A673 (cell line): ENCODE measurements at regions of chr10 and their contacts with region 1.

Region 1: GRCh38 chr10:35379226-35380137 is 43.2 kb downstream of the CCNY start:
- DNase-seq: peak; percentile 92
- H3K4me3 ChIP-seq: no peak overlapping the region
- H3K27ac ChIP-seq: peak overlapping the region; percentile 87
- H3K4me1 ChIP-seq: peaks cover 56% of the 10 kb centered on the region
- H3K27me3 ChIP-seq: no peaks in the 10 kb centered on the region
- CTCF ChIP-seq: peak; percentile 44

Region 2: DNA sequence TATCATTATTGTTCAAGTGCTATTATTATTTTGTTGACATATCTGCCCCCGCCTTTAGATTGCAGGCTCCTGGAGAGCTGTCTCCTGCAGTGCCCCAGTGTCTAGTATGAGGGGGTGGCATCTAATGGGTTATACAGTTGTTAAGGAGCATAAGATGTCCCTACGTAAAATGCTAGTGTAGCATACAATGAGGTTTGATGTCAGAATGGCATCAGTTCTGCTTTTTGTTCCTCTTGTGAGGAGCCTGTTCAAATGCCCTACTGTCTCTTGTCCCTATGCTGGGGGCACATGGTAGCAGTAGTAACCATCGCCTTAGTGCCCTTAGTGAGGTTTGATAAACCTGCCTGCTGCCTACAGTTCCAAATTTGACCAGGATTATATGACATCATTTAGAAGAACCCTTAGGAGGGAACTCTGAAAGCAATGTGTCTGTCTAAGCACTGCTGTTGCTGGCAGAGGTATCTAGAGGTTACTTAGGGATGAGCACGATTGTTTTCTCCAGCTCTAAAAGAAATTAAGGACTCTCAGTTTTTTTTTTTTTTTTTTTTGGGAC is 243.1 kb before region 1 on chr10:
- CTCF ChIA-PET with region 1: no interaction called
- POLR2A ChIA-PET with region 1: no interaction called
- intact Hi-C with region 1: no loop called
- DNase-seq: peak; percentile 21
- H3K4me3 ChIP-seq: no peak overlapping the region
- H3K27ac ChIP-seq: no peak overlapping the region
- H3K4me1 ChIP-seq: peaks cover 18% of the 10 kb centered on the region
- H3K27me3 ChIP-seq: no peaks in the 10 kb centered on the region
- CTCF ChIP-seq: no peak

Region 3: GRCh38 chr10:35336084-35336831 is 43.2 kb before region 1 on chr10 and contains the start of gene CCNY:
- CTCF ChIA-PET with region 1: no interaction called
- POLR2A ChIA-PET with region 1: interaction called, 5 read pairs
- intact Hi-C with region 1: loop called (anchors 5 kb)
- DNase-seq: peak; percentile 85
- H3K4me3 ChIP-seq: peak within 1 kb of the TSS; percentile 91
- H3K27ac ChIP-seq: peak within 1 kb of the TSS; percentile 88
- H3K4me1 ChIP-seq: peaks cover 50% of the 10 kb centered on the region
- H3K27me3 ChIP-seq: no peaks in the 10 kb centered on the region
- CTCF ChIP-seq: no peak
- total RNA-seq, gene CCNY: 84.8 and 85.8 TPM in 2 replicates